SK-N-SH (cell line): ENCODE measurements at regions of chr10 and their contacts with region 1.

Region 1: DNA sequence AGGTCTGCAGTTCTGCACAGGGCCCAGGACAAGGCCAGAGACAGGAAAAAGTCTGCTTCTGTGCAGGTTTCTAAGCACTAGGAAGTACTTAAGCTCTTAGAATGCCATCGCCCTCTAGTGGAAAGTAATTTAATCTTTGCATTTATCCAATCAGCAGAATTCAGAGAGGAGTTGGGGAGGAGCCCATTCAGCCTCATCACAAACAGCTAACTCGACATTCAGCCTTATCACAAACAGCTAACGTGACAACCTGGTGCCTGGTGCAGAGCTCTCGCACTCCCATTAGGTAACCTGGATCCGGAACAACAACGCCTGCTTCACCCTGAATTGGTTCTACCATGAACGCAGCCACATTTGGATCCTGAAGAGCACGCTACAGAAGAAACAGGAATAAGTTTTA is 15.2 kb downstream of the OAT start:
- DNase-seq: peak; percentile 72
- H3K4me3 ChIP-seq: no peak overlapping the region; a peak in 1 of 4 replicates
- H3K27ac ChIP-seq: no peak overlapping the region
- H3K4me1 ChIP-seq: peaks cover 0 to 2% of the 10 kb centered on the region in 2 experiments; a peak in 1 of 4 replicates
- H3K27me3 ChIP-seq: no peaks in the 10 kb centered on the region
- CTCF ChIP-seq: peak; percentile 72
- EP300 ChIP-seq: no peak; a peak in 1 of 4 replicates
- RAD21 ChIP-seq: peak; percentile 70

Region 2: DNA sequence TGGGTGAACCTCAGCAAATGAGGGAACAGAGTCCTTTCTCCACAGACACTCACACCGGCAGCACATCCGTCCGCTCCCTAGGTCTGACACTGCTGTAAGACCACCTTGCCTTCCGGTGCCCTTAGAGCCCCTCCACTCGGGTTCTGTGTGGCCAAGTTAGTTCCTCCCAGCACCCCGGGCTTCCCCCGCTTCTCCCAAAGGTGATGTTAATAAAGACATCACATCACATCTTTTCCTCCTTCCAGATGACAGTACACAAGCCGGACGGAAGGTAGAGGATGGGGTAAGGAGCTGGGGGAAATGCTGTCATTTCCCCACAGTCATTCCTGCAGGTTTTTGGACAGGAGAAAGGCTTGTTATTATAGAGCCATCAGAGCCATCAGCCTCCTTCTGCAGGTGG is 27.1 kb before region 1 on chr10:
- CTCF ChIA-PET with region 1: no interaction called
- POLR2A ChIA-PET with region 1: no interaction called
- DNase-seq: no peak
- H3K4me3 ChIP-seq: no peak overlapping the region
- H3K27ac ChIP-seq: no peak overlapping the region
- H3K4me1 ChIP-seq: no peaks in the 10 kb centered on the region
- H3K27me3 ChIP-seq: no peaks in the 10 kb centered on the region
- CTCF ChIP-seq: no peak
- EP300 ChIP-seq: no peak
- RAD21 ChIP-seq: no peak

Region 3: DNA sequence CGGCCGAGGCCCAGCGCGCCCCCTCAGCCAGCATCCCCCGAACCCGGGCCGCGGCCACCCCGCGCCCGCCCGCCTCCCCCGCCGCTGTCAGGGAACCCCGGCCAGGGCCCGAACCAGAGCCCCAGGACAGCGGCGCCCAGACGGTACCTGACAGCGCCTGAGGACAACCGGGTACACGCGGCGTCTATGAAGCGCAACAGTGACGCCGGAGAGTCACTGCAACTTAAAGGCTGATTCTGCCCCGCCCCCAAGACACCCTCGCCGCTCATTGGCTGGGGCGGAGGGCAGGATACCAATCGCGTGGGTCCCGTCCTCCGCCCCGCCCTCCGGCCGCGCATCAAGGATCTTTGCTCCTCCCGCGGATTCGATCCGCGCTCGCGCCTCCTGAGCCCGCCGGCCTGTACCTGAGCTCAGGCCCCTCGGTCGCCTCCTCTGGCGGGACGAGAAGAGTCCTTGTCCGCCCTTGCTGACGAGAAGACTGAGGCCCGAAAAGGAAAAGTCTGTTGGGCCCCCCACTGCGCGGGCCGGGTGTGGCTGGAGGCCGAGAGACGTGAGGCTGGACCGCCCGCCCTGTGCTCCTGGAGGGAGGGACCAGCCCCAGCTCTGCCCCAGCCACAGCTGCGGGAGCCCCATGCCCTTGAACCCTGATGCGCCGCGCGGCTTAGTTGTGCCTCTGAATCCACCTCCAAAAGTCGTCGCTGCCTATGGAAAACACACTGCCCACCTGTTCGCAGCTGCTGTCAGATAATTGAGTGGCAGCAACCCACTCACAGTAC is 15.4 kb after region 1 on chr10 and contains the start of gene OAT:
- CTCF ChIA-PET with region 1: interaction called, 29 read pairs
- POLR2A ChIA-PET with region 1: interaction called, 3 read pairs
- DNase-seq: peak; percentile 99
- H3K4me3 ChIP-seq: peak within 1 kb of the TSS; percentile 76 to 87
- H3K27ac ChIP-seq: peak within 1 kb of the TSS; percentile 65 to 70
- H3K4me1 ChIP-seq: peaks cover 0 to 6% of the 10 kb centered on the region in 2 experiments; a peak in 1 of 4 replicates
- H3K27me3 ChIP-seq: peaks cover 14% of the 10 kb centered on the region; the same call in 1 of the 2 replicates
- CTCF ChIP-seq: peak; percentile 11
- EP300 ChIP-seq: no peak
- RAD21 ChIP-seq: 0 out of 2 replicates have a peak, but pooled peaks have one; percentile 1
- polyA plus RNA-seq, gene OAT: 65.7 and 97.6 TPM in 2 replicates